SK-N-SH (cell line): ENCODE measurements at regions of chr12 and their contacts with region 1.

Region 1: GRCh38 chr12:62581288-62582064 is 114.8 kb downstream of the MON2 start:
- DNase-seq: peak; percentile 39
- H3K4me3 ChIP-seq: no peak overlapping the region; a peak in 1 of 4 replicates
- H3K27ac ChIP-seq: no peak overlapping the region
- H3K4me1 ChIP-seq: no peaks in the 10 kb centered on the region
- H3K27me3 ChIP-seq: no peaks in the 10 kb centered on the region
- CTCF ChIP-seq: peak; percentile 78
- EP300 ChIP-seq: no peak
- RAD21 ChIP-seq: peak; percentile 82

Region 2: GRCh38 chr12:62291864-62292760 is 289.4 kb before region 1 on chr12:
- CTCF ChIA-PET with region 1: no interaction called
- POLR2A ChIA-PET with region 1: no interaction called
- DNase-seq: no peak
- H3K4me3 ChIP-seq: no peak overlapping the region
- H3K27ac ChIP-seq: no peak overlapping the region
- H3K4me1 ChIP-seq: peaks cover 0 to 7% of the 10 kb centered on the region in 2 experiments; a peak in 1 of 4 replicates
- H3K27me3 ChIP-seq: no peaks in the 10 kb centered on the region
- CTCF ChIP-seq: no peak
- EP300 ChIP-seq: no peak
- RAD21 ChIP-seq: no peak

Region 3: GRCh38 chr12:62543753-62544152 is 37.7 kb before region 1 on chr12:
- CTCF ChIA-PET with region 1: interaction called, 14 read pairs
- POLR2A ChIA-PET with region 1: no interaction called
- DNase-seq: no peak
- H3K4me3 ChIP-seq: no peak overlapping the region
- H3K27ac ChIP-seq: no peak overlapping the region
- H3K4me1 ChIP-seq: no peaks in the 10 kb centered on the region
- H3K27me3 ChIP-seq: no peaks in the 10 kb centered on the region
- CTCF ChIP-seq: no peak
- EP300 ChIP-seq: no peak
- RAD21 ChIP-seq: no peak

Region 4: DNA sequence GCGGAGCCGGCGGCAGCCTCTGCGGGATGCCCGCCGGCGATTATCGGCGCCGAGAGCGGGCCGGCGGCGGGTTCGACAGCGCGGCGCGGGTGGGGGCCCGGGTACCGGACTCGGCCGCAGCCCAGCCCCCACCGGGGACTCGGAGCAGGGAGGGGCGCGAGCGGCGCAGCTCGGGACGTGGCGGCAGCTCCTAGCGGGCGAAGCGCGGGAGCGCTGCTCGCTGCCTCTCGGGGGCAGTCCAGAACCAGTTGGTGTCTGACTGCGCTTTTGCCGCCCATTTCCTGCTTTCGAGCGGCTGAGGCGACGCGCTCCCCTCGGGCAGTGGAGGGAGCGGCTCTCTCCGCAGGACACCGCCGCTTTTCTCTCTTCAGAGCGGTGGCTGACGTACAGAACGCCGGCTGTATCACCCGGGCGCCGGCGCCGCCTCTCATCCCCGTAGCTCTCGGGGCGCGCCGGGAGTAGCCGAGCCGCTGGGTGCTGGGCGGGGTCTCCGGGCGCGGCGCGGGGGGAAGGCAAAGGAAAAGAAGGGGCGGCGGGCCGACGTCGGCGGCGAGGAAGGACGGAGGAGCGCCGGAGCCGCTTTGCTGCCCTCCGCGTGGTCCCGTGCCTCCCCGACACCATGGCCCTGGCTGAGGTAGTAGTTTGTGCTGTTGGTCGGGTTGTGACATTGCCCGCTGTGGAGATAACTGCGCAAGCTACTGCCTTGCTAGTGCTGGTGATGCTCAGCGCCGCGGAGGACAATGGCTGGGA is 21.8 kb after region 1 on chr12:
- CTCF ChIA-PET with region 1: interaction called, 16 read pairs
- POLR2A ChIA-PET with region 1: interaction called, 8 read pairs
- DNase-seq: peak; percentile 90
- H3K4me3 ChIP-seq: peak overlapping the region; percentile 88 to 91
- H3K27ac ChIP-seq: peak overlapping the region; percentile 98 to 100
- H3K4me1 ChIP-seq: no peaks in the 10 kb centered on the region; a peak in 2 of 4 replicates
- H3K27me3 ChIP-seq: no peaks in the 10 kb centered on the region
- CTCF ChIP-seq: peak; percentile 42
- EP300 ChIP-seq: peak in 1 of 2 experiments; percentile 20; a peak in 1 of 4 replicates
- RAD21 ChIP-seq: peak; percentile 53

Region 5: GRCh38 chr12:62799126-62799736 is 217.8 kb after region 1 on chr12:
- CTCF ChIA-PET with region 1: interaction called, 200 read pairs
- POLR2A ChIA-PET with region 1: no interaction called
- DNase-seq: peak; percentile 81
- H3K4me3 ChIP-seq: no peak overlapping the region; a peak in 1 of 4 replicates
- H3K27ac ChIP-seq: no peak overlapping the region
- H3K4me1 ChIP-seq: peaks cover 0 to 3% of the 10 kb centered on the region in 2 experiments; a peak in 1 of 4 replicates
- H3K27me3 ChIP-seq: no peaks in the 10 kb centered on the region
- CTCF ChIP-seq: peak; percentile 98
- EP300 ChIP-seq: no peak
- RAD21 ChIP-seq: peak; percentile 93

Region 6: GRCh38 chr12:62813031-62813829 is 231.8 kb after region 1 on chr12:
- CTCF ChIA-PET with region 1: interaction called, 12 read pairs
- POLR2A ChIA-PET with region 1: no interaction called
- DNase-seq: peak; percentile 63
- H3K4me3 ChIP-seq: peak overlapping the region in 1 of 2 experiments; percentile 46; a peak in 2 of 4 replicates
- H3K27ac ChIP-seq: no peak overlapping the region
- H3K4me1 ChIP-seq: peaks cover 0 to 3% of the 10 kb centered on the region in 2 experiments; a peak in 2 of 4 replicates
- H3K27me3 ChIP-seq: peaks cover 9% of the 10 kb centered on the region; the same call in 1 of the 2 replicates
- CTCF ChIP-seq: peak; percentile 82
- EP300 ChIP-seq: no peak
- RAD21 ChIP-seq: peak; percentile 75